ENCODE measurements at regions of chr5 and their contacts with region 1.

Region 1: DNA sequence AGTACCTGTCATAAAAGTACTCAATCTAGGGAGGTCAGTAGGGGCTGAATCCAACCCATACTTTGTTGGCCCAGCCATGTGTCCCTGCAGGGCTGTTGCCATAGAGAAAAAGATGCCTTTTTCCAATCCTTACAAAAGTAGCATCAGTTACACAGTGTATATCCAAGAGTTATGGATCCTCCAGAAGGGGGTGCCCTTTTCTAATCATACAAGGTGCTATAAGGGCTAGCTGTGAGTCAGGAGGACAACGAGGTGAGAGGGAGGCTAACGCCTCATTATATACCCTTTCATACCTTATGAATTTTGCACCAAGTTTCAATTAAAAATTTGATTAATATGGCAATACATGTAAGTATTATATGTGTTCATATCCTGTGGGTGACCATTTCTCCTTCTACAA is 4.8 kb downstream of the KIAA0825 start:
- DNase-seq: no peak
- ATAC-seq: no peak
- H3K4me3 Mint-ChIP-seq: no peak overlapping the region
- H3K27ac Mint-ChIP-seq: no peak overlapping the region
- H3K4me1 Mint-ChIP-seq: peaks cover 11% of the 10 kb centered on the region
- H3K27me3 Mint-ChIP-seq: no peaks in the 10 kb centered on the region
- CTCF ChIP-seq: no peak

Region 2: DNA sequence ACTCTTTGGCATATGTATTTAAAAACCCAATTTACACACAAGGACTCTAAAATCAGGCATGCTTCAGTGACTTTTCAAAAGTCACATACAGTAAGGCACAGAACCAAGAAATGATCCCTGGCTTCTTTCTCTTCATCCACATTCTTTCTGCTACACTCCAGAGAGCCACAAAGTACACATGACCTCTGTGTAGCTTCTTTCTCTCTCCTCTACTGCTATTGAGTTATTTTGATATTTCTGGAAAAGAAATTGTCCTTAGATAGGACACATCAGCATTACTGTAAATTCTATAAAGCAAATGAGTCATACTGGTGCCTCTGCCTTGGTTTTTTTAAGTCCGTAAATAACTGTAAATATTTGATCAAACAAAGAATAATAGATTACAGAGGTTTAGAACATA is 91.5 kb before region 1 on chr5:
- CTCF ChIA-PET with region 1: no interaction called
- POLR2A ChIA-PET with region 1: no interaction called
- intact Hi-C with region 1: no loop called
- DNase-seq: no peak
- ATAC-seq: no peak
- H3K4me3 Mint-ChIP-seq: no peak overlapping the region
- H3K27ac Mint-ChIP-seq: no peak overlapping the region
- H3K4me1 Mint-ChIP-seq: no peaks in the 10 kb centered on the region
- H3K27me3 Mint-ChIP-seq: no peaks in the 10 kb centered on the region
- CTCF ChIP-seq: no peak

Region 3: DNA sequence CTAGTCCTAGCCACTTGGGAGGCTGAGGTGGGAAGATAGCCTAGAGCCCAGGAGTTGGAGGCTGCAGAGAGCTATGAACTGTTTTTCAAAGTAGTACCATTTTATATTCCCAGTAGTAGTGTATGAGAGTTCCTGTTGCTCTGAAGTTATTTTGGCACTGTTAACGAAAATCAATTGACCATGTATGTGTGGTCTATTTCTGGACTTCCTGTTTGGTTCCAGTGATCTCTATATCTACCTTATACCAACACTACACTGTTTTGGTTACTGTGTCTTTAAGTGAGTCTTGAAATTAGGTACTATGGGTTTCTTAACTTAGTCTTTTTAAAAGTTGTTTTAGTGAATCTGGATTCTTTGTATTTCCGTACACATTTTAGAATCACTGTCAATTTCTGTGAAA is 18.4 kb after region 1 on chr5:
- CTCF ChIA-PET with region 1: no interaction called
- POLR2A ChIA-PET with region 1: no interaction called
- intact Hi-C with region 1: no loop called
- DNase-seq: no peak
- ATAC-seq: peak; percentile 56
- H3K4me3 Mint-ChIP-seq: peak overlapping the region; percentile 53
- H3K27ac Mint-ChIP-seq: peak overlapping the region; percentile 72
- H3K4me1 Mint-ChIP-seq: peaks cover 32% of the 10 kb centered on the region
- H3K27me3 Mint-ChIP-seq: no peaks in the 10 kb centered on the region
- CTCF ChIP-seq: no peak

Region 4: GRCh38 chr5:94693043-94693822 is 79.7 kb after region 1 on chr5:
- CTCF ChIA-PET with region 1: interaction called, 3 read pairs
- POLR2A ChIA-PET with region 1: no interaction called
- intact Hi-C with region 1: loop called (anchors 5 kb)
- DNase-seq: no peak
- ATAC-seq: peak; percentile 31
- H3K4me3 Mint-ChIP-seq: no peak overlapping the region
- H3K27ac Mint-ChIP-seq: no peak overlapping the region
- H3K4me1 Mint-ChIP-seq: no peaks in the 10 kb centered on the region
- H3K27me3 Mint-ChIP-seq: no peaks in the 10 kb centered on the region
- CTCF ChIP-seq: no peak

Region 5: GRCh38 chr5:94740286-94740685 is 126.7 kb after region 1 on chr5:
- CTCF ChIA-PET with region 1: interaction called, 17 read pairs
- POLR2A ChIA-PET with region 1: no interaction called
- intact Hi-C with region 1: loop called (anchors 1 kb)
- DNase-seq: no peak
- ATAC-seq: no peak
- H3K4me3 Mint-ChIP-seq: no peak overlapping the region
- H3K27ac Mint-ChIP-seq: no peak overlapping the region
- H3K4me1 Mint-ChIP-seq: peaks cover 7% of the 10 kb centered on the region
- H3K27me3 Mint-ChIP-seq: no peaks in the 10 kb centered on the region
- CTCF ChIP-seq: no peak

Region 6: GRCh38 chr5:94784536-94785510 is 171.2 kb after region 1 on chr5:
- CTCF ChIA-PET with region 1: no interaction called
- POLR2A ChIA-PET with region 1: no interaction called
- intact Hi-C with region 1: loop called (anchors 1 kb)
- DNase-seq: no peak
- ATAC-seq: no peak
- H3K4me3 Mint-ChIP-seq: no peak overlapping the region
- H3K27ac Mint-ChIP-seq: no peak overlapping the region
- H3K4me1 Mint-ChIP-seq: no peaks in the 10 kb centered on the region
- H3K27me3 Mint-ChIP-seq: no peaks in the 10 kb centered on the region
- CTCF ChIP-seq: no peak

Measured in activated B cell treated with CpG ODN at 0.5 μM for 24 hours (primary cell).